ENCODE measurements at regions of chr4 and their contacts with region 1.

Region 1: GRCh38 chr4:83252782-83253405 is 31.7 kb downstream of the COQ2 start:
- DNase-seq: peak; percentile 51 to 88 (median 74)
- ATAC-seq: peak; percentile 93
- H3K4me3 ChIP-seq: no peak overlapping the region
- H3K4me3 Mint-ChIP-seq: no peak overlapping the region
- H3K27ac ChIP-seq: no peak overlapping the region
- H3K27ac Mint-ChIP-seq: peak overlapping the region; percentile 53
- H3K4me1 ChIP-seq: peaks cover 13% of the 10 kb centered on the region
- H3K4me1 Mint-ChIP-seq: peaks cover 24% of the 10 kb centered on the region
- H3K27me3 ChIP-seq: no peaks in the 10 kb centered on the region
- H3K27me3 Mint-ChIP-seq: no peaks in the 10 kb centered on the region
- CTCF ChIP-seq: peak; percentile 88

Region 2: DNA sequence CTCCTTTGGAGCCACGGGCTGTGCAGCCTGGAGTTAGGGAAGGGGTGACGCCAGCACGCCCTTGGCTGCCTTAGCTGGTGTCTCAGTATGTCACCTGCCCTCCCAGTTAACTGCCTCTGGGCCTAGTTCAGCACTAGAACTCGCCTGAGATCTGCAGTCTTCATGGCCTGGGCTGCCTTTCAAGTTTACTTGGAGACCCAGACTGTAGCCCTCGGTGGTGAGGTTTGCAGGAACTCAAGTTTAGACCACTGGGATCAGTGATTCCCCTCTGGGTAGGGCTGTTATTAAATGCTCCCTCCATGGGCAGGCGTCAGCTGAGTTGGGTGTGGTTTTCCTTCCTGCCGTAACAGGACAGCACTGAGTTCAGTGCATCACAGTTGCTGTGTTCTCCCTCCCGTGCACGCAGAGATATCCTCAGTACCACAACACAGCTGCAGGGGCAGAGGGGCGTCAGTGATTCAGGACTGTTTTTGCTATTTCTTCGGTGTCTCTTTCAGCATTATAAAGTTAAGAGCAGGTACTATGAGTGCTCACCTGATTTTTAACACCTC is 168.9 kb before region 1 on chr4:
- CTCF ChIA-PET with region 1: interaction called, 15 read pairs
- POLR2A ChIA-PET with region 1: interaction called, 4 read pairs
- intact Hi-C with region 1: no loop called
- DNase-seq: peak; percentile 44 to 91 (median 61)
- ATAC-seq: peak; percentile 98
- H3K4me3 ChIP-seq: no peak overlapping the region
- H3K4me3 Mint-ChIP-seq: peak overlapping the region; percentile 47
- H3K27ac ChIP-seq: peak overlapping the region; percentile 67 to 81
- H3K27ac Mint-ChIP-seq: peak overlapping the region; percentile 97
- H3K4me1 ChIP-seq: peaks cover 29% of the 10 kb centered on the region
- H3K4me1 Mint-ChIP-seq: peaks cover 39% of the 10 kb centered on the region
- H3K27me3 ChIP-seq: no peaks in the 10 kb centered on the region
- H3K27me3 Mint-ChIP-seq: no peaks in the 10 kb centered on the region
- CTCF ChIP-seq: peak; percentile 65

Region 3: GRCh38 chr4:83093130-83093529 is 159.8 kb before region 1 on chr4:
- CTCF ChIA-PET with region 1: interaction called, 14 read pairs
- POLR2A ChIA-PET with region 1: no interaction called
- intact Hi-C with region 1: no loop called
- DNase-seq: no peak
- ATAC-seq: no peak
- H3K4me3 ChIP-seq: no peak overlapping the region
- H3K4me3 Mint-ChIP-seq: no peak overlapping the region
- H3K27ac ChIP-seq: peak overlapping the region in 1 of 2 experiments; percentile 31
- H3K27ac Mint-ChIP-seq: peak overlapping the region; percentile 80
- H3K4me1 ChIP-seq: peaks cover 26% of the 10 kb centered on the region
- H3K4me1 Mint-ChIP-seq: peaks cover 53% of the 10 kb centered on the region
- H3K27me3 ChIP-seq: no peaks in the 10 kb centered on the region
- H3K27me3 Mint-ChIP-seq: no peaks in the 10 kb centered on the region
- CTCF ChIP-seq: no peak

Region 4: DNA sequence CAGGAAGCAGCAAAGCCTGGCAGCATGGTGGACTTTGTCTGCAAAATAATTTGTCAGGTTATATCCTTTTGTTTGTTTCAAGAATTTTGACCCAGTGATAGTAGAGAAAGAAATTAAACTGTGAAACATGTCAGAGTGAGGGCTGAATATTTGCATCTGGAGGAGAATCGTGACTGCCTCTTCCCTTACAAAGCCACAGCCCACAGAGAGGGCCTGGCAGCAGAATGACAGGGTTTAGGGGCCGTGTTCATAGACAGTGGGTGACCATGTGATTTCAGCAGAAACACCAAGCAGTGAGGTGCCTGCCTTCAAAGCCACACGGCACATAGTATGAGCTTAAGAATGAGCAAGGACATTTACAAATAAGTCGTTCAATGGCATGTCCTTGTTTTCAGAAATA is 113.9 kb before region 1 on chr4:
- CTCF ChIA-PET with region 1: interaction called, 13 read pairs
- POLR2A ChIA-PET with region 1: no interaction called
- intact Hi-C with region 1: loop called (anchors 2 to 10 kb)
- DNase-seq: peak in 8 of 9 experiments; percentile 17 to 75 (median 47)
- ATAC-seq: peak; percentile 93
- H3K4me3 ChIP-seq: no peak overlapping the region
- H3K4me3 Mint-ChIP-seq: peak overlapping the region; percentile 24
- H3K27ac ChIP-seq: peak overlapping the region in 1 of 2 experiments; percentile 72
- H3K27ac Mint-ChIP-seq: peak overlapping the region; percentile 80
- H3K4me1 ChIP-seq: peaks cover 27% of the 10 kb centered on the region
- H3K4me1 Mint-ChIP-seq: peaks cover 31% of the 10 kb centered on the region
- H3K27me3 ChIP-seq: no peaks in the 10 kb centered on the region
- H3K27me3 Mint-ChIP-seq: no peaks in the 10 kb centered on the region
- CTCF ChIP-seq: no peak

Region 5: DNA sequence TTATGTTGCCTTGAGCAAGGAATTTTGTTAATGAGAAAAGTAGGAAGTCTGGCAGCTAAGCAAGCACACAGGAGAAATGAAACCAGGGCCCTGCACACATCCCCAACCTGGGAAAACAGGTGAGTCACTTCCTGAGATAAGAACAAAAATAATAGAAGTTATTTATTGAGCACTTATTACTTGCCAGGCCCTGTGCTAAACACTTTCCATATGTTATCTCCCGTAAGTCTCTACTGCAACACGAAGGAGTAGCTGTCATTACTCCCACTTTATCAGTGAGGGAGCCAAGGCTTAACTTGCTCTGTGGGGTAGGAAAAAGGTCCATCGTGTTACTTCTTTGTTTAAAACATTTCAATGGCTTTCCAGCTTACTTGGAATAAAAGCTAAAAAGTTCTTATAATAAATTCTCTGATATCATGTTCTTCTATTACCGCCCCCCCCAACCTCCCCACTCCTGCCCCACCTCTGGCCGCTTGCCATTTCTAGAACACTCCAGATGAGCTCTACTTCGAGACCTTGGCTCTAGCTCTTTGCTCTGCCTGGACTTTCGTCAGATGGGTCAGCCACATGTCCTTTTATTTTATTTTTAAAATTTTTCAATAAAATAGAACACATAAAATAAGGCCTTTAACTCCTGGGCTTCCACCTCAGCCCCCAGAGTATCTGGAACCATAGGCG is 102.1 kb before region 1 on chr4:
- CTCF ChIA-PET with region 1: interaction called, 22 read pairs
- POLR2A ChIA-PET with region 1: interaction called, 3 read pairs
- intact Hi-C with region 1: loop called in 1 of 2 experiments (anchors 10 kb)
- DNase-seq: no peak
- ATAC-seq: no peak
- H3K4me3 ChIP-seq: no peak overlapping the region
- H3K4me3 Mint-ChIP-seq: no peak overlapping the region
- H3K27ac ChIP-seq: no peak overlapping the region
- H3K27ac Mint-ChIP-seq: no peak overlapping the region
- H3K4me1 ChIP-seq: peaks cover 10% of the 10 kb centered on the region
- H3K4me1 Mint-ChIP-seq: peaks cover 30% of the 10 kb centered on the region
- H3K27me3 ChIP-seq: no peaks in the 10 kb centered on the region
- H3K27me3 Mint-ChIP-seq: no peaks in the 10 kb centered on the region
- CTCF ChIP-seq: no peak

Region 6: DNA sequence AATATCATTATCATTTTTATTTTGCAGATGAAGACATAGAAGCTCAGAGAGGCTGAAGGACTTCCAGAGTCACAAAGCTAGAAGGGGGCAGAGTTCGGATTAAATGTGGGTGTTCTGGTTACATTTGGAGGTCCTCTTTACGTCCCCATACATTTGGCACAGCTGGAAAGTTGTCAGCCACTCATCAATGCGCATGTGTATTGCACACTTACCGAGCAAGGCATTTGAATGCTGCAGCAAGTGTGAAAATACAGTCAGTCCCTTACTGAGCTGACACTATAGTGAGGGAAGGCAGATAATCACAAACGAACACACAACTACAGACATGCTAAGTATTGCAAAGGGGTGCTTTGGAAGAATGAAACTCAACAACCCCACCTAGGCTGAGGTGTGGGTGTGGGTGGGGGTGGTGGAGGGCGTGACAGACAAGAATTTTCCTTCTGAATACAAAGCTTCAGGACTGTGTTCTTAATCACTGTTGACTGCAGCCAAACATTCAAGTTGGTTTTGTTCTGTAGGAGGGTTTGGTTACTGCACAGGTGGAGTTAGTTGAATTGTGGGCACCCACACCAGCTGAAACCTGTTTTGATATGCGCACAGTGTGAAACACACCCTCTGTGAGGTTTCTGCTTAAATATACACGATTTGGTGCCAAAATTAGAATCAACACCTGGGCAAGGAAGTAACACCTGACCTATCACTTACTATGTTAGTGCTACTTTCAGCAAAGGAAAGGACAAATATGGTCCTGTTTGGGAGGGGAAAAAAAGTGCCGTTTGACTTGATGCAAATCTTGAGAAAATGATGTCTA is 40.6 kb before region 1 on chr4:
- CTCF ChIA-PET with region 1: interaction called, 23 read pairs
- POLR2A ChIA-PET with region 1: interaction called, 5 read pairs
- intact Hi-C with region 1: loop called in 1 of 2 experiments (anchors 2 kb)
- DNase-seq: peak; percentile 31 to 93 (median 59)
- ATAC-seq: peak; percentile 86
- H3K4me3 ChIP-seq: peak overlapping the region; percentile 1 to 4
- H3K4me3 Mint-ChIP-seq: peak overlapping the region; percentile 67
- H3K27ac ChIP-seq: peak overlapping the region; percentile 41 to 58
- H3K27ac Mint-ChIP-seq: peak overlapping the region; percentile 95
- H3K4me1 ChIP-seq: peaks cover 73% of the 10 kb centered on the region
- H3K4me1 Mint-ChIP-seq: peaks cover 78% of the 10 kb centered on the region
- H3K27me3 ChIP-seq: no peaks in the 10 kb centered on the region
- H3K27me3 Mint-ChIP-seq: no peaks in the 10 kb centered on the region
- CTCF ChIP-seq: no peak

Region 7: GRCh38 chr4:83552924-83553323 is 300.0 kb after region 1 on chr4:
- CTCF ChIA-PET with region 1: no interaction called
- POLR2A ChIA-PET with region 1: no interaction called
- intact Hi-C with region 1: no loop called
- DNase-seq: no peak
- ATAC-seq: no peak
- H3K4me3 ChIP-seq: no peak overlapping the region
- H3K4me3 Mint-ChIP-seq: no peak overlapping the region
- H3K27ac ChIP-seq: no peak overlapping the region
- H3K27ac Mint-ChIP-seq: no peak overlapping the region
- H3K4me1 ChIP-seq: no peaks in the 10 kb centered on the region
- H3K4me1 Mint-ChIP-seq: no peaks in the 10 kb centered on the region
- H3K27me3 ChIP-seq: no peaks in the 10 kb centered on the region
- H3K27me3 Mint-ChIP-seq: no peaks in the 10 kb centered on the region
- CTCF ChIP-seq: no peak

Measured in CD8-positive, alpha-beta T cell (primary cell).